PC-3 (cell line): ENCODE measurements at regions of chr5 and their contacts with region 1.

Region 1: GRCh38 chr5:28576022-28576421 is 1537.6 kb upstream of the CDH9 start:
- DNase-seq: peak; percentile 54
- ATAC-seq: peak; percentile 77
- H3K4me3 ChIP-seq: no peak overlapping the region
- H3K27ac ChIP-seq: no peak overlapping the region
- H3K4me1 ChIP-seq: peaks cover 4% of the 10 kb centered on the region; the same call in 1 of the 2 replicates
- H3K27me3 ChIP-seq: no peaks in the 10 kb centered on the region
- CTCF ChIP-seq: peak; percentile 73

Region 2: DNA sequence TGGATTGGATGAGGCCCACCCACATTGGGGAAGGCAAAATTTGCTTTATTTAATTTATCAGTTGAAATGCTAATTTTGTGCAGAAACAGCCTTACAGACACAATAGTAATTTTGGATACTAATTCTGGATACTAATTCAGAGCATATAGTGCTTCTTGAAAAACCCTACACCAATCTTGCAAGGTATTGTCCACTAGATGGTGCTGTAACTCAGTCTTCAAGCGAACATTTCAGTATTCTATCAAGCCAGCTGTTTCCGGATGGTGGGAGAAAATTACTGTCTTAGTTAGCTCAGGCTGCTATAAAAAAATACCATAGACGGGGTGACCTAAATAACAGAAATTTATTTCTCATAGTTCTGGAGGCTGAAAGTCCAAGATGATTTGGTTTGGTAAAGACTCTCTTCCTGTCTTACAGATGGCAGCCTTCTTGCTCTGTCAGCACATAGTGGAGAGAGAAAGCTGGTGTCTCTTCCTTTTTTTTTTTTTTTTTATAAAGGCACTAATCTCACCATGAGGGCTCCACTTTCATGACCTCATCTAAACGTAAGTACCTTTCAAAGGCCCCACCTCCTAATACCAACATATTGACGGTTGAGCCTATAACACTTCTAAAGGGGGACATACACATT is 231.1 kb before region 1 on chr5:
- CTCF ChIA-PET with region 1: interaction called, 4 read pairs
- POLR2A ChIA-PET with region 1: no interaction called
- intact Hi-C with region 1: loop called (anchors 10 kb)
- DNase-seq: peak; percentile 77
- ATAC-seq: peak; percentile 62
- H3K4me3 ChIP-seq: no peak overlapping the region
- H3K27ac ChIP-seq: no peak overlapping the region
- H3K4me1 ChIP-seq: no peaks in the 10 kb centered on the region
- H3K27me3 ChIP-seq: no peaks in the 10 kb centered on the region
- CTCF ChIP-seq: peak; percentile 89

Region 3: GRCh38 chr5:28355831-28356230 is 220.2 kb before region 1 on chr5:
- CTCF ChIA-PET with region 1: no interaction called
- POLR2A ChIA-PET with region 1: no interaction called
- intact Hi-C with region 1: no loop called
- DNase-seq: no peak
- ATAC-seq: no peak
- H3K4me3 ChIP-seq: no peak overlapping the region
- H3K27ac ChIP-seq: no peak overlapping the region
- H3K4me1 ChIP-seq: no peaks in the 10 kb centered on the region
- H3K27me3 ChIP-seq: no peaks in the 10 kb centered on the region
- CTCF ChIP-seq: no peak

Region 4: GRCh38 chr5:28548856-28549255 is 27.2 kb before region 1 on chr5:
- CTCF ChIA-PET with region 1: no interaction called
- POLR2A ChIA-PET with region 1: no interaction called
- intact Hi-C with region 1: loop called (anchors 2 kb)
- DNase-seq: peak; percentile 41
- ATAC-seq: peak; percentile 73
- H3K4me3 ChIP-seq: no peak overlapping the region
- H3K27ac ChIP-seq: no peak overlapping the region
- H3K4me1 ChIP-seq: peaks cover 6% of the 10 kb centered on the region
- H3K27me3 ChIP-seq: no peaks in the 10 kb centered on the region
- CTCF ChIP-seq: no peak

Region 5: DNA sequence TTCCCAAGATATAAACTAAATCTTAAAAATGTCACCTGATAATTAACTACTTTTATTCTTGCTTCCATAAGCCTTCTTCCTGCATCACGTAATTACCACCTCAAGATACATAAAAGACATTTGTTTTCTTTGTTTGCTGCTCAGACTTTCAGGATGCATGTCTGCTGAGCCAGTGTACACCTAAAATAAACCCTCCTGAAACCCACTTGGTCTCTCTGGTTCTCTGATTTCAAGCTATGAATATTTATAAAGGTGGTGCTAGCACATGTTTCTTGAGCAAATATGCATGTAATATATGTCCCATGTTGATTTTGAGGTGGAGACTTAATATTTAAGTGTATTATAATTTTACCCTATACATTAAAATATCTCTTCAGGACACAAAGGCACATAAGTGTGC is 90.1 kb after region 1 on chr5:
- CTCF ChIA-PET with region 1: no interaction called
- POLR2A ChIA-PET with region 1: no interaction called
- intact Hi-C with region 1: no loop called
- DNase-seq: no peak
- ATAC-seq: no peak
- H3K4me3 ChIP-seq: no peak overlapping the region
- H3K27ac ChIP-seq: no peak overlapping the region
- H3K4me1 ChIP-seq: no peaks in the 10 kb centered on the region
- H3K27me3 ChIP-seq: no peaks in the 10 kb centered on the region
- CTCF ChIP-seq: no peak